OCI-LY7 (cell line): ENCODE measurements at regions of chr4 and their contacts with region 1.

Region 1: GRCh38 chr4:120819805-120820437 is 102.6 kb downstream of the PRDM5 start:
- DNase-seq: no peak
- H3K4me3 ChIP-seq: no peak overlapping the region
- H3K27ac ChIP-seq: no peak overlapping the region
- H3K4me1 ChIP-seq: no peaks in the 10 kb centered on the region
- CTCF ChIP-seq: no peak

Region 2: GRCh38 chr4:120830204-120830603 is 10.3 kb after region 1 on chr4:
- CTCF ChIA-PET with region 1: no interaction called
- POLR2A ChIA-PET with region 1: interaction called, 10 read pairs
- intact Hi-C with region 1: no loop called
- DNase-seq: no peak
- H3K4me3 ChIP-seq: no peak overlapping the region
- H3K27ac ChIP-seq: no peak overlapping the region
- H3K4me1 ChIP-seq: no peaks in the 10 kb centered on the region
- CTCF ChIP-seq: no peak

Region 3: DNA sequence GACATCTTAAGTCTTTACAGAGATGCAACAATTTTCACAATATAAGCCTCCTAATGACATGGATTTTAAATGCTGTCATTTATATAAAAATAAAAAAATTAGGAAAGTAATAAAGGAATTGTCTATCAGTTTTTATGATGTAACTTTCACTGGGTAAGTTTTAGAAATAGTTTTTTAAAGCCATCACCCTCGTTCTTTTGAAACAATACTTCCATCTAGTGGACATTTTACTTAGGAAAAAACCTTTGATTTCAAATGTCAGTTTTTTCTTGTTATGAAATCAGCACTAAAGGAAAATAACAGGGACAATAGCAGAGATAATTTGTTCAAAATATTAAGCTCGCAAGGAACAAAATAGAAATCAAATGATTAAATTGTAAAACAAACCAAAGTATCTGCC is 276.7 kb after region 1 on chr4:
- CTCF ChIA-PET with region 1: no interaction called
- POLR2A ChIA-PET with region 1: no interaction called
- intact Hi-C with region 1: loop called (anchors 10 kb)
- DNase-seq: peak; percentile 37
- H3K4me3 ChIP-seq: no peak overlapping the region
- H3K27ac ChIP-seq: no peak overlapping the region
- H3K4me1 ChIP-seq: no peaks in the 10 kb centered on the region
- CTCF ChIP-seq: peak; percentile 83